Activated CD8-positive, alpha-beta T cell treated with anti-CD3 and anti-CD28 coated beads for 36 hours (primary cell): ENCODE measurements at regions of chr12 and their contacts with region 1.

Region 1: DNA sequence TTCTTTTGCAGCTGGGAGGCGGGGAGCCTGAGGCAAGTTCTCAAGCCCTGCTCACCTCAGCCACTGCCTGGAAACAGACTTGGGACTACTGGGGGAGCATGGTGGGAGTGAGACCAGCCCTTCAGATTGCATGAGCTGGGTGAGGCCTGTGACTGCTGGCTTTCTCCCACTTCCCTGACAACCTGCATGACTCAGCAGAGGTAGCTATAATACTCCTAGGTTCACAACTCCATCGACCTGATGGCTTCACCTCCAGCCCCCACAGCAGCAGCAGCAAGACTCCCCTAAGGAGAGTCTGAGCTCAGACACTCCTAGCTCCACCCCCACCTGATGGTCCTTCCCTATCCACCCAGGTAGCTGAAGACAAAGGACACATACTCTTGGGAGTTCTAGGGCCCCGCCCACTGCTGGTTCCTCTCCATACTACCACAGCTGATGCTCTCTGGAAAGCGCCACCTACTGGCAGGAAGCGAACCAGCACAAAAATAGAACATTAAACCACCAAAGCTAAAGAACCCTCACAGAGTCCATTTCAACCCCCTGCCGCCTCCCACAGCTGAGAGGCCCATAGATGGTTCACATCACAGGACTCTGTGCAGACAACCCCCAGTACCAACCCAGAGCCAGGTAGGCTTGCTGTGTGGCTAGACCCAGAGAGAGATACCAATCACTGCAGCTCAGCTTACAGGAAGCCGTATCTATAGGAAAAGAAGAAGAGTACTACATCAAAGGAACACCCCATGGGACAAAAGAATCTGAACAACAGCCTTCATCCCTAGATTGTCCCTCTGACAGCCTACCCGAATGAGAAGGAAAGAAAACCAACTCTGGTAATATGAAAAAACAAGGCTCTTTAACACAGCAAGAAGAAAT is 68.7 kb downstream of the RPAP3 start:
- DNase-seq: peak; percentile 72
- ATAC-seq: no peak
- H3K4me3 Mint-ChIP-seq: no peak overlapping the region
- H3K27ac Mint-ChIP-seq: no peak overlapping the region
- H3K4me1 Mint-ChIP-seq: peaks cover 7% of the 10 kb centered on the region
- H3K27me3 Mint-ChIP-seq: no peaks in the 10 kb centered on the region
- CTCF ChIP-seq: peak; percentile 50

Region 2: DNA sequence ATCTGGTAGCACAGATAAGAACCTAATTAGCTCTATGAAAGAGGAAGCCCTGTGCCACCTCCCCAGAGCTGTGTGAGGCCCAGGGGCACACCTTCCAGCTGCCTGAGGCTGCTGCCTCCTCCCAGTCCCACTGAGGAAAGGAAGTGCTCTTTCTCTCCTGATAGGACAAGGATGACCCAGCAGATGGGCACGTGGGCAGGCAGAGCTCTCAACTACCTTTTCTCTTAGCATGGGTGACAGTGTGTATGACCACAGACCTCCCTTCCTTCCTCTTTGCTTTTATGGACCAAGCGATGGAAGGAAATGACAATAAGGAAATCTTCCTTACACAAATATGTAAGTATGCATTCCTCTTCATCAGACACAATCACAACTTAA is 429.8 kb before region 1 on chr12:
- CTCF ChIA-PET with region 1: no interaction called
- POLR2A ChIA-PET with region 1: no interaction called
- intact Hi-C with region 1: no loop called
- DNase-seq: peak; percentile 76
- ATAC-seq: peak; percentile 60
- H3K4me3 Mint-ChIP-seq: peak overlapping the region; percentile 79
- H3K27ac Mint-ChIP-seq: peak overlapping the region; percentile 96
- H3K4me1 Mint-ChIP-seq: peaks cover 69% of the 10 kb centered on the region
- H3K27me3 Mint-ChIP-seq: no peaks in the 10 kb centered on the region
- CTCF ChIP-seq: no peak

Region 3: DNA sequence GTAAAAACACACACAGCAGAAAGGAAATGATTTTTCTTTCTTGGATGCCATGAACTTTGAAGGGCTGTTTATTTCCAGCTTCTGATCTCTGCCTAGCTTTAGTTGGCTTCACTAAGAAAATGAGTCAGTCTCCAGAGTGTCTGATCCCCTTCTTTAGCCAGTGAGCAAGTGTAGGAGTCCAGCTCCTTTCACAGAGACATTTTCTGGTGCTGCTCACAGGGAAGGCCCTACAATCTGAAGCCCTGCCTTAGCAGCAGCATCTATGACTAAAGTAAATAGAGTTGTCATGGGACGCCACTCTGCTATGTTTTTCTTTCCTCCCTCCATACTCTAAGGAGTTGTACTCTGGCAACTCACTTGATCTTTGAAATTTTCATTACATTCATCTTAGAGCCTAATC is 34.8 kb before region 1 on chr12:
- CTCF ChIA-PET with region 1: interaction called, 10 read pairs
- POLR2A ChIA-PET with region 1: no interaction called
- intact Hi-C with region 1: no loop called
- DNase-seq: no peak
- ATAC-seq: no peak
- H3K4me3 Mint-ChIP-seq: no peak overlapping the region
- H3K27ac Mint-ChIP-seq: no peak overlapping the region
- H3K4me1 Mint-ChIP-seq: peaks cover 13% of the 10 kb centered on the region
- H3K27me3 Mint-ChIP-seq: no peaks in the 10 kb centered on the region
- CTCF ChIP-seq: no peak

Region 4: GRCh38 chr12:47651368-47652254 is 14.5 kb after region 1 on chr12:
- CTCF ChIA-PET with region 1: interaction called, 24 read pairs
- POLR2A ChIA-PET with region 1: no interaction called
- intact Hi-C with region 1: no loop called
- DNase-seq: peak; percentile 62
- ATAC-seq: peak; percentile 98
- H3K4me3 Mint-ChIP-seq: no peak overlapping the region
- H3K27ac Mint-ChIP-seq: no peak overlapping the region
- H3K4me1 Mint-ChIP-seq: peaks cover 12% of the 10 kb centered on the region
- H3K27me3 Mint-ChIP-seq: no peaks in the 10 kb centered on the region
- CTCF ChIP-seq: peak; percentile 81

Region 5: DNA sequence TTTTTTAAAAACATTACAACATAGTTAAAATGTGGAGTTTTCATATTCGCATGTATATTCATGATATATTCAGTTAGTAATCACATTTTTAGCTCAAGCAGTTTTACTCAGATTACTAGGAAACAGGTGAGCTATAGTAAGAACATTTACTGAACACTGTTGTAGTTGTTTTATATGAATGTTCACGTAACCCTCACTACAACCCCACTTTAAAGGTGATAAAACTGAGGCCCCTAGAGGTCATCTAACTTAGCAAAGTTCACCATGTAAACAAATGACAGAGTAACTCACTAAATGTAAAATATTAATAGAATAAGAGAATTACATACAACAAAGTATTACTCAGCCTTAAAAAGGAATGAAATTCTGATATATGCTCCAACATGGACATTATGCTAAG is 42.6 kb after region 1 on chr12:
- CTCF ChIA-PET with region 1: interaction called, 11 read pairs
- POLR2A ChIA-PET with region 1: no interaction called
- intact Hi-C with region 1: no loop called
- DNase-seq: no peak
- ATAC-seq: no peak
- H3K4me3 Mint-ChIP-seq: no peak overlapping the region
- H3K27ac Mint-ChIP-seq: no peak overlapping the region
- H3K4me1 Mint-ChIP-seq: peaks cover 15% of the 10 kb centered on the region
- H3K27me3 Mint-ChIP-seq: no peaks in the 10 kb centered on the region
- CTCF ChIP-seq: no peak

Region 6: GRCh38 chr12:47686645-47687240 is 49.6 kb after region 1 on chr12:
- CTCF ChIA-PET with region 1: interaction called, 11 read pairs
- POLR2A ChIA-PET with region 1: no interaction called
- intact Hi-C with region 1: no loop called
- DNase-seq: peak; percentile 27
- ATAC-seq: peak; percentile 73
- H3K4me3 Mint-ChIP-seq: no peak overlapping the region
- H3K27ac Mint-ChIP-seq: no peak overlapping the region
- H3K4me1 Mint-ChIP-seq: peaks cover 5% of the 10 kb centered on the region
- H3K27me3 Mint-ChIP-seq: no peaks in the 10 kb centered on the region
- CTCF ChIP-seq: peak; percentile 73